Posterior vena cava (tissue), 2 donors: ENCODE measurements at regions of chr1 and their contacts with region 1.

Region 1: DNA sequence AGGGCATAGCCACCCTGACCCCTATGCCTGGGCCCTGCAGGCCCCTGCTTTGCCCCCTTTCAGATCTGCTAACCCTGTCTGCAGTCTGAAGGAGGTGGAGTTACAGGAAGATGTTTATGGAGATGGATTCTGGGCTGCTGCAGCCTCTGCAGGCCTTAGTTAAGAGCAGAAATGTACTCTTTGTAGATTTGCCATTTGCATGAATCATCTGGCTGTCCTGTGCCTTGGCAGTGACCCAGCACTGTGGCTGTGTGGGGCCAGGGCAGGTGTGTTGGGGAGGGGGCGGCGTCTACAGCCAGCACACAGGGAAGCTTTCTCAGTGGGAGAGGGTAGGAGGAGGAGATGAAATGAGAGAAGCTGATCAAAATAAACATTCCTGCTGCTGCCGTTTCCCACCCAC is 867.3 kb downstream of the PLA2G4A start:
- DNase-seq: no peak

Region 2: DNA sequence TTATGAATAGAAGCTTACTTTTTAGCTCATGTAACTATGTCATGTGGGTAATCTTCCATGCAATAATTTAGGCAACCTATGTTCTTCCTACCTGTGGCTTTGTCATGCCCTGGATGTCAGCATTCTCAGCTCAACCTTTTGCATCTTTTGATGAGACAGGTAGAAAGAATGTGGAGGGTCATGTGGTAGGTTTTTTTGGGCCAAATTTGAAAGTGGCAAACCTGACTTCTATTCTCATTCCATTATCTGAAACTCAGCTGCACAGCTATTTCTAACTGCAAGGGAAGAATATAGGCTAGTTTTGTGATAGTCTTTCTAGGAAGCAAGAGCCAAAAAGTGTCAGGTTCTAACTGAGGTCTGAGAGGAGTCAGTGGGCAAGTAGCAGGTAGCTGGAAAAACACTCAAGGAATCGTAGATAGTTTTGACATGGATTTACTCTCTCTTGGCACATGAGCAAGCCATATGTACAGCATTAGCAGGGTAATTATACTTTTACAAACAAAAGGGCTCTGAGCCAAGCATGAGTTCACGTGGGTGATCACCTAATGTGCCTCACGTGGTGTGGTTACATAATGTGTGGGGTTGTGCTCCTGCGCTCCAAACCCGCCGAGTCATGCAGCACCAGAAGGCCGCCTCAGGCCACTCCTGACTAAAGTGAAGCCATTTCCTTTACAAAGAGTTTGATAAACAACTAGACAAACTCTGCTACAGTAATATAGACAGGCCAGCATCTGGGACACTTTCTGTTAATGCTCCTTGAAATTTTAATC is 146.5 kb after region 1 on chr1:
- intact Hi-C with region 1: no loop called
- DNase-seq: no peak

Region 3: GRCh38 chr1:188670837-188671236 is 974.8 kb after region 1 on chr1:
- intact Hi-C with region 1: no loop called
- DNase-seq: no peak

Region 4: DNA sequence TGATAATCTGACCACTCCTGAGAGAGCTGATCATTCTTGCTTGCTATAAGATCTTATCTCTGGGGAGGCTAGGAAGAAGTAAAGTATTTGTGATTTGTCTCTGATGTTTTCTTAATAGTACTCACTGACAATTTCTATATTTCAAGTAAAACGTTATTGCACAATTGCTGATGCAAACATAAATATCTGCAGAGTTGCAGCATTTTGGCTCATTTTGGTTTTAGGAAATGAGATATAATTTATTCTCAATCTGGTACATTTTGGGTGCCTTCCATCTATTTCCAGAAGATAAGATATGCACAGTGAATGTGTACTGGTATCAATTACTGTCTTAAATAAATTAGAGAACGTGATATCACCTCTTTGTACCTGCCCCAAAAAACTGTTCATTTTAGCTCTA is 1350.0 kb after region 1 on chr1:
- intact Hi-C with region 1: loop called in 1 of 2 experiments (anchors 10 kb)
- DNase-seq: no peak